Activated naive CD4-positive, alpha-beta T cell treated with anti-CD3 and anti-CD28 coated beads for 36 hours (primary cell): ENCODE measurements at regions of chr18 and their contacts with region 1.

Region 1: GRCh38 chr18:58552057-58552461 is 76.8 kb downstream of the ALPK2 start:
- DNase-seq: peak; percentile 73
- H3K4me3 Mint-ChIP-seq: no peak overlapping the region
- H3K27ac Mint-ChIP-seq: peak overlapping the region; percentile 68
- H3K4me1 Mint-ChIP-seq: peaks cover 51% of the 10 kb centered on the region
- H3K27me3 Mint-ChIP-seq: no peaks in the 10 kb centered on the region

Region 2: DNA sequence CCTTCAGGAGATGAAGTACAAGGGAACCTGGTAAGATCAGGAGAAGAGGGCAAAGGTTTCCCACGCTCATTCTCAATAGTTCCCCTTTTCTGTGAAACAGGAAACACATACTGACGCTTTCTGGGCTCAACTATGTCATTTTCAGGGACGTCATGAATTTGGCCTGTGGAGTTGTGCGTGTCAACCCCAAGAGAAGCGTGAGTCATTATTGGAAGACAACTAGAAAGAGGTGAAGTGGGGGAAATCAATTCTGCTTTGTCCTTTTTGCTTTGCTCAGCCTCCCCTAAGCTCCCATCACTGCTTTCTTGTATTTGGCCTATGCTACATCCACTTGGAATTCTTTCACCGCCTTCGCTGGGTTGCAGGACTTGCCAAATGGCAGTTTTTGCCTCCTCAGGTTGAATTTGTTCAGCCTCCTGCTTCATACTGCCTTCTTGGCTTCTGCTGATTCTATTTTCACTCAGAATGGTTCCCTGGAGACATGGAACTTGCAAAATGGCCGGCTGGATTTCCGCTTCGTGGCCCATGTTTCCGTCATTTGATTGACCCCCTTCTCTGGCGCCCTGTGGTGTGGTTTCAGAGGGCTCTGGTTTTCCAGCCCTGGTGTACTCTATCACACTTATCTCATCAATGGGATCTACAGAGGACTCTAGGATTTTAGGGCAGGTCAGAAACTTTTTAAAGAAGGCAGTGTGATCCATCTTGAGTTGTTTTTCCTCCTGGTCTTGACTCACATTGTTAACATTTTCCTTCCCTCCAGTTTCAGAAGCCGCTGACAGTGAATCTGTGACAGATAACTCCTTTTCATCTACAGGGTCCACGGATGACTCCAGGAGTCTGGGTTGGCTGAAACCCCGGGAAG is 16.5 kb before region 1 on chr18:
- CTCF ChIA-PET with region 1: interaction called, 6 read pairs
- intact Hi-C with region 1: loop called (anchors 2 kb)
- DNase-seq: peak; percentile 75
- H3K4me3 Mint-ChIP-seq: no peak overlapping the region
- H3K27ac Mint-ChIP-seq: peak overlapping the region; percentile 21
- H3K4me1 Mint-ChIP-seq: peaks cover 46% of the 10 kb centered on the region
- H3K27me3 Mint-ChIP-seq: no peaks in the 10 kb centered on the region

Region 3: GRCh38 chr18:58562999-58563667 is 11.1 kb after region 1 on chr18:
- CTCF ChIA-PET with region 1: no interaction called
- intact Hi-C with region 1: loop called (anchors 2 kb)
- DNase-seq: no peak
- H3K4me3 Mint-ChIP-seq: no peak overlapping the region
- H3K27ac Mint-ChIP-seq: no peak overlapping the region
- H3K4me1 Mint-ChIP-seq: peaks cover 19% of the 10 kb centered on the region
- H3K27me3 Mint-ChIP-seq: no peaks in the 10 kb centered on the region